ENCODE measurements at regions of chr5 and their contacts with region 1.

Region 1: GRCh38 chr5:159620853-159621540 is 290.7 kb upstream of the IL12B start:
- DNase-seq: no peak
- H3K4me3 Mint-ChIP-seq: no peak overlapping the region
- H3K27ac Mint-ChIP-seq: no peak overlapping the region
- H3K4me1 Mint-ChIP-seq: no peaks in the 10 kb centered on the region
- H3K27me3 Mint-ChIP-seq: peaks cover 5% of the 10 kb centered on the region

Region 2: DNA sequence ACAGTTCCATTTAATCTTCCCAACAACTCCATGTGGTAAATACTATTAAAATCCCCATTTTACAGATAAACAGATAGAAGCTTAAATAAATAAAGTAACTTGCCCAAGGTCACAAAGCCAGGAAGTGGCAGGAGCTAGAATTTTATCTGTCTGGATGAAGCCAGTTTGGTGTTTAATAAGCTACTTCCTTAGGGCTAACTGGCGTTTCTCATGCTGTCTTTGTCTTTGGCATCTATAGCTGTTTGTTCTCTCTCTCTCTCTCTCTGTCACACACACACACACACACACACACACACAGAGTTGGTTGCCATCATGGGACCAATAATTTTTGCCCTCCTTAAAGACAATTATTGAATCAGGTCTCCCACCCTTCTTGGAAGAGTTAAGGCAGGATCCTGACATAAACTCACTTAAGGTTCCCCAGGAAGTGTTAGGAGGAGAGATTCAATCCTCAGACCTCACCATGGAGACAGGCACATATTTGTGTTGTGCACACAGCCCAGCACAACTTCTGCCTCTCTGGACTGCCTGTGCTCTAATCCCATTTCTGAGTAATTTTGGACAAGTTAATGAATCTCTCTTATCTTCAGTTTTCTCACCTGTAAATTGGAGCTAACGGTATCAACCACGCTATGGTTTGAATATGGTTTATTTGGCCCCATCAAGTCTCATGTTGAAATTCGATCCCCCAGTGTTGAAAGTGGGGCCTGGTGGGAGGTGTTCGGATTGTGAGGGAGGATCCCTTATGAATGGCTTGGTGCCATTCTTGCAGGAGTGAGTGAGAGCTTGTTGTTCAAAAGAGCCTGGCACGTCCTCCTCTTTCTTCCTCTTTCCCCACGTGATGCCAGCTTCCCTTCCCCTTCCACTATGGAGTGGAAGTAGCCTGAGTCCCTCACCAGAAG is 286.9 kb after region 1 on chr5:
- CTCF ChIA-PET with region 1: no interaction called
- POLR2A ChIA-PET with region 1: interaction called, 11 read pairs
- DNase-seq: no peak
- H3K4me3 Mint-ChIP-seq: no peak overlapping the region
- H3K27ac Mint-ChIP-seq: no peak overlapping the region
- H3K4me1 Mint-ChIP-seq: peaks cover 4% of the 10 kb centered on the region
- H3K27me3 Mint-ChIP-seq: peaks cover 7% of the 10 kb centered on the region